BJ (cell line): ENCODE measurements at regions of chr18 and their contacts with region 1.

Region 1: GRCh38 chr18:12744103-12744502 is 41.3 kb downstream of the PSMG2 start:
- DNase-seq: no peak
- H3K4me3 ChIP-seq: no peak overlapping the region
- H3K27me3 ChIP-seq: no peaks in the 10 kb centered on the region
- CTCF ChIP-seq: peak; percentile 63

Region 2: DNA sequence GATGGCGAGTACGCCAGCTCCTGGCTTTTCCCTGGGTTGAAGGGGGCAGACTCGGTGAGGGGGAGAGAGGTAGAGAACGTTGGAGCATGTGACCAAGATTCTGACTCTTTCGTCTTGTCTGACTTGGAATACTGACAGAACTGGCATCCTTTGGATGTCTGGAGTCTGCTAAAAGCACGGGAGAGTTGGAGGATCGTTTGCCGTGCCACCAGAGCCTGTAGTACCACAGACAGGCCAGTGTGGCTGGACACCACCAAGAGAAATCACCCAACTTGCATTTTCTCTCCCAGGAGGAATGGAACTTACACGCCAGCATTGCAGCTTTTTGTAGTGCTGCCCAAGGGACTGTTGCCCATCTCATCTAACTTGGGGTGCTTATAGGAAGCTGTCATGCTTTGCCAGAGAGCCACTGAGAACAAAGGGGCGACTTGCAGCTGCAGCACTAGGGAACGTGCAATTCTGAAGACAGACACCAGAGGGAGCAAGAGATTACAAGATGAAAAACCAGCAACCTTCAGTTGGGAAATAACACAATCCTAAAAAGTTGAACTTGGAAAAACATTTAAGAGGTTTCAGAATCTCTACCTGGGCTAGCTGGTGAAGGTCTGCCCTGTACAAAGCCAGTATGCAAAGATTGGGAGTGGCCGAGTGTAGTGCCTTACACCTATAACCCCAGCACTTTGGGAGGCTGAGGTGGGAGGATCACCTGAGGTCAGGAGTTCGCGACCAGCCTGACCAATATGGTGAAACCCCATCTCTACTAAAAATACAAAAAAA is 17.1 kb before region 1 on chr18:
- CTCF ChIA-PET with region 1: interaction called, 32 read pairs
- POLR2A ChIA-PET with region 1: no interaction called
- DNase-seq: no peak
- H3K4me3 ChIP-seq: no peak overlapping the region
- H3K27me3 ChIP-seq: no peaks in the 10 kb centered on the region
- CTCF ChIP-seq: peak; percentile 86

Region 3: GRCh38 chr18:12828116-12829051 is 84.3 kb after region 1 on chr18:
- CTCF ChIA-PET with region 1: no interaction called
- POLR2A ChIA-PET with region 1: no interaction called
- DNase-seq: no peak
- H3K4me3 ChIP-seq: no peak overlapping the region
- H3K27me3 ChIP-seq: no peaks in the 10 kb centered on the region
- CTCF ChIP-seq: no peak

Region 4: GRCh38 chr18:12890506-12890905 is 146.4 kb after region 1 on chr18:
- CTCF ChIA-PET with region 1: interaction called, 55 read pairs
- POLR2A ChIA-PET with region 1: interaction called, 4 read pairs
- DNase-seq: no peak
- H3K4me3 ChIP-seq: no peak overlapping the region
- H3K27me3 ChIP-seq: no peaks in the 10 kb centered on the region
- CTCF ChIP-seq: peak; percentile 22; the same call in 1 of the 2 replicates

Region 5: GRCh38 chr18:12911025-12911928 is 167.2 kb after region 1 on chr18:
- CTCF ChIA-PET with region 1: interaction called, 11 read pairs
- POLR2A ChIA-PET with region 1: no interaction called
- DNase-seq: no peak
- H3K4me3 ChIP-seq: no peak overlapping the region
- H3K27me3 ChIP-seq: 0 out of 2 replicates have a peak, but pooled peaks cover 2% of the 10 kb centered on the region
- CTCF ChIP-seq: no peak

Region 6: GRCh38 chr18:12946549-12947354 is 202.6 kb after region 1 on chr18:
- CTCF ChIA-PET with region 1: interaction called, 16 read pairs
- POLR2A ChIA-PET with region 1: no interaction called
- DNase-seq: peak; percentile 84
- H3K4me3 ChIP-seq: peak overlapping the region; percentile 85
- H3K27me3 ChIP-seq: no peaks in the 10 kb centered on the region
- CTCF ChIP-seq: peak; percentile 37; the same call in 1 of the 2 replicates